ENCODE measurements at regions of chr1 and their contacts with region 1.

Region 1: DNA sequence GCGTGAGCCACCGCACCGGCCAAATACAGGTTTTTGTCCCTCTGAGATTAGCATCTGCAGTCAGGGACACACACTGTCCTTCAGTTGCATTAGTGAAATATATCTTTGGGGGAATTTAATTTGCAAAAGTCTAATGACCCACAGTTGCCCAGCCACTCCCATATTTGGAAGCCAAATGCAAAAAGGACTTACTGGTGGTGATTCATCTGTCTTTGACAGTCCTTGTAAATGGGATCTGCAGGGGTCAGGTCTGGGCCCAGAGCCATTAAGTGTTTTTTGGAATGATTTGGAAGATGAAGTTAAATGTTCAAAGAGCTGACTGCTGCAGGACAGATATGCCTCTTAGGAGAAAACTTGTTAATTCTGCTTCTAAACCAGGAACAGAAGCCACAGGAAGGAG is 44.6 kb upstream of the DNASE2B start:
- DNase-seq: no peak
- H3K4me3 ChIP-seq: no peak overlapping the region
- H3K27ac ChIP-seq: no peak overlapping the region
- H3K4me1 ChIP-seq: peaks cover 0 to 10% (median 5%) of the 10 kb centered on the region in 4 donors
- H3K27me3 ChIP-seq: no peaks in the 10 kb centered on the region
- CTCF ChIP-seq: no peak
- EP300 ChIP-seq: no peak
- POLR2A ChIP-seq: no peak

Region 2: GRCh38 chr1:84156210-84156621 is 197.5 kb before region 1 on chr1:
- in situ Hi-C with region 1: no loop called
- intact Hi-C with region 1: no loop called
- DNase-seq: no peak
- H3K4me3 ChIP-seq: no peak overlapping the region
- H3K27ac ChIP-seq: no peak overlapping the region
- H3K4me1 ChIP-seq: peaks cover 0 to 16% (median 0%) of the 10 kb centered on the region in 4 donors
- H3K27me3 ChIP-seq: no peaks in the 10 kb centered on the region
- CTCF ChIP-seq: no peak
- EP300 ChIP-seq: no peak
- POLR2A ChIP-seq: no peak

Region 3: DNA sequence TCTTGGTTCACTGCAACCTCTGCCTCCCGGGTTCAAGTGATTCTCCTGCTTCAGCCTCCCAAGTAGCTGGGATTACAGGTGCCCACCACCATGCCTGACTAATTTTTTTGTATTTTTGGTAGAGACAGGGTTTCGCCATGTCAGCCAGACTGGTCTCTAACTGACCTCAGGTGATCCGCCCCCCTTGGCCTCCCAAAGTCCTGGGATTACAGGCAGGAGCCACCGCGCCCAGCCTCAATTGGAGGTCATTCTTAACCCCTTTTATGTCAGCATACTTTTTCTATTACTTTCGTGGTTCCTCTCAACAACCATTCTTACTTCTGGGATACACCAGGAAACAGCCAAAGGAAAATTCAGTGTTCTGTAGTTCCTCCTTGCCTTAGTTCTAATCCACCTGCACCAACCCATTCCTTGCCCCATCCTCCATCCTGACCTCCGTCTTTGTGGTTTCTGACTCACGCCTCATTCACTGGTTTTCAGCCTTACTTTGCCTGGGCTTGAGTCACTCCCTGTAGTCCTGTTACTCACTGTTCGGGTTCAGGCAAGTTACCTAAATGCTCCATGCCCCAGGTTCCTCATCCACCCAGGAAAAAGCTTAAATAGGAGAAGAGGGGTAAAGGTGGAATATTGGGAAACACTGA is 935.6 kb after region 1 on chr1:
- in situ Hi-C with region 1: no loop called
- intact Hi-C with region 1: loop called (anchors 5 kb)
- DNase-seq: no peak
- H3K4me3 ChIP-seq: no peak overlapping the region
- H3K27ac ChIP-seq: no peak overlapping the region
- H3K4me1 ChIP-seq: no peaks in the 10 kb centered on the region
- H3K27me3 ChIP-seq: no peaks in the 10 kb centered on the region
- CTCF ChIP-seq: no peak
- EP300 ChIP-seq: no peak
- POLR2A ChIP-seq: no peak

Measured in transverse colon (tissue), 4 donors.